ENCODE measurements at regions of chr11 and their contacts with region 1.

Region 1: GRCh38 chr11:117107701-117108590 is 9.7 kb upstream of the SIK3 start:
- DNase-seq: no peak
- ATAC-seq: no peak
- H3K4me3 ChIP-seq: no peak overlapping the region
- H3K27ac ChIP-seq: no peak overlapping the region
- H3K4me1 ChIP-seq: peaks cover 0 to 7% of the 10 kb centered on the region in 2 experiments; a peak in 2 of 5 replicates
- H3K27me3 ChIP-seq: no peaks in the 10 kb centered on the region; a peak in 1 of 5 replicates
- CTCF ChIP-seq: no peak
- EP300 ChIP-seq: no peak
- POLR2A ChIP-seq: no peak
- RAD21 ChIP-seq: no peak

Region 2: DNA sequence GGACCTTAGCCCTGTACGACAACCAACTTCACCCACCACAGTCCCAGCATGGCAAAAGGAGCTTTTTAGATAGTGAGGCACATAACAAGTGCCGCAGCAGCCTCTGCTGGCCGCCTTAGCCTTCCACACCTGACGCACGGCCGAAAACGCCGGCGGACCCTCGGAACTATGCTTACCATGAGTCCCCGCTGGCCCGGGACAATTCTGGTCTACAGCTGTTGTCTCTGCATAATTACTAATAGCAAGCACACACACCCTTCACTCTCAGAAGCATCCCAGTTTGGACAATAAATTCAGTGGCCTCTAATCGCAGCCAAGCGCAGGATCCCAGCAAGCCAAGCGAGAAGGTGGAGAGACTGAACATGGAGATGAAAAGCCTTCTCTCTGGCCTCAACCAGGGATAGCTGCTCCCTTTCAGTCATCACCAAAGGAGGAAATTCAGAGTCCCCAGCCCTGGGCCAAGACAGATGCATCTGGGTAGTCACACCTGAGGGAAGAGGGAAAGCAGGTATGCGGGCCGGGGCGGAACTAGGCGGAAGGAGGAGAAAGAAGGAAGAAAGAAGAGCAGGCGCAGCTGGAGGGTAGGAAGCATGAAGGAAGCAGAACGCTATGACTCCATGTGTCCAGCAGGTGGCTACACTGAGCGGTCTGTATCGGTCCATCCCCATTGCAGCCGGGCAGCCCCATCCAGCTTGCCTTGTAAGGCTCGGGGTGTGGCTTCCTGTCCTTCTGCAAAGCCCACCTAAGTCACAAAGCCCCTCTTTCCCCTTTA is 375.5 kb before region 1 on chr11:
- CTCF ChIA-PET with region 1: interaction called, 5 read pairs
- POLR2A ChIA-PET with region 1: no interaction called
- in situ Hi-C with region 1: loop called (anchors 10 kb)
- intact Hi-C with region 1: loop called (anchors 1 kb)
- DNase-seq: peak; percentile 79 to 93 (median 88)
- ATAC-seq: peak; percentile 97
- H3K4me3 ChIP-seq: no peak overlapping the region
- H3K27ac ChIP-seq: no peak overlapping the region
- H3K4me1 ChIP-seq: no peaks in the 10 kb centered on the region
- H3K27me3 ChIP-seq: peaks cover 19 to 49% of the 10 kb centered on the region in 2 experiments; a peak in 4 of 5 replicates
- CTCF ChIP-seq: peak; percentile 82 to 86 (median 82)
- EP300 ChIP-seq: no peak
- POLR2A ChIP-seq: no peak
- RAD21 ChIP-seq: peak; percentile 40 to 77; a peak in 3 of 4 replicates

Region 3: DNA sequence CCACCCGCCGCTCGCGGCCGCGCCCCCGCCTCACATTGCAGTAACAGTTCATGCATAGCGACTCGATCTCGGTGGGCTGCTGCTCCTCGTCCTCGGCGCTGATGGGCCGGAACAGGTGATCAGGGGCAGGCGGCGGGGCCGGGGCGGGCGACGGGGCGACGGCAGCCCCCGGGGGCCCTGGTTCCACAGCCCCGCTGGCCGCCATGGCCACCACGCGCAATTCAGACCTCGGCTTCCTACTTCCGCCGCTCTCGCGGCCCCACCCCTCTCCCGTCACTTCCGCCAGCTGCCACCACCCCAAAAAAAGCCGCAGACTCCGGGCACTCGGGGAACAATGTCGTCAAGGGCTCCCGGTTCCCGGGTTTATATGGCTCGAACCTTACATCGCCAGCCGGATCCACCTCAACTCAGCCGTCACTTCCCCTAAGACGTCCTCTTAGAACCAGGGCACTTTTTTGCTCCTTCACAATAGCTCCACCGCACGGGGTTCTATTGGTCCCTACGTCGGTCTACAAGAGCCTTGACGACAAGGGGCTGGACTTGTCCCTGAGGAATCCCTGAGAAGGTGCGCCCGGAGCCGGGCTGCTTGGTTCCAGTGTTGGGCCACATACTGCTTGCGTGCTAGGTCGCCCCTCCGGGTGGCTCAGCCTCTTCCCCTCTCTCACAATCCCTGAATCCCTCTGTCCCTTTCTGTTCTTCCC is 320.0 kb before region 1 on chr11 and contains the start of gene ZPR1:
- CTCF ChIA-PET with region 1: interaction called, 11 read pairs
- POLR2A ChIA-PET with region 1: no interaction called
- in situ Hi-C with region 1: loop called (anchors 5 kb)
- intact Hi-C with region 1: loop called (anchors 1 kb)
- DNase-seq: peak; percentile 83 to 93 (median 90)
- ATAC-seq: peak; percentile 87
- H3K4me3 ChIP-seq: peak within 1 kb of the TSS; percentile 98
- H3K27ac ChIP-seq: peak within 1 kb of the TSS; percentile 60
- H3K4me1 ChIP-seq: peaks cover 22 to 33% of the 10 kb centered on the region in 2 experiments; a peak in 4 of 5 replicates
- H3K27me3 ChIP-seq: no peaks in the 10 kb centered on the region
- CTCF ChIP-seq: no peak; a peak in 1 of 6 replicates
- EP300 ChIP-seq: no peak
- POLR2A ChIP-seq: peak; percentile 83
- RAD21 ChIP-seq: no peak
- polyA plus RNA-seq, gene ZPR1: 13.0 to 17.2 TPM

Region 4: GRCh38 chr11:116879800-116880625 is 227.9 kb before region 1 on chr11:
- CTCF ChIA-PET with region 1: interaction called, 23 read pairs
- POLR2A ChIA-PET with region 1: interaction called, 3 read pairs
- in situ Hi-C with region 1: loop called (anchors 5 kb)
- intact Hi-C with region 1: loop called (anchors 1 kb)
- DNase-seq: peak in 3 of 4 experiments; percentile 34 to 66 (median 48)
- ATAC-seq: peak; percentile 97
- H3K4me3 ChIP-seq: no peak overlapping the region
- H3K27ac ChIP-seq: no peak overlapping the region
- H3K4me1 ChIP-seq: no peaks in the 10 kb centered on the region
- H3K27me3 ChIP-seq: no peaks in the 10 kb centered on the region
- CTCF ChIP-seq: peak; percentile 64 to 78 (median 67); a peak in 5 of 6 replicates
- EP300 ChIP-seq: no peak
- POLR2A ChIP-seq: no peak
- RAD21 ChIP-seq: peak; percentile 78 to 83

Region 5: GRCh38 chr11:116980136-116980793 is 127.7 kb before region 1 on chr11:
- CTCF ChIA-PET with region 1: no interaction called
- POLR2A ChIA-PET with region 1: no interaction called
- in situ Hi-C with region 1: no loop called
- intact Hi-C with region 1: no loop called
- DNase-seq: no peak
- ATAC-seq: no peak
- H3K4me3 ChIP-seq: no peak overlapping the region
- H3K27ac ChIP-seq: no peak overlapping the region
- H3K4me1 ChIP-seq: no peaks in the 10 kb centered on the region
- H3K27me3 ChIP-seq: no peaks in the 10 kb centered on the region
- CTCF ChIP-seq: no peak
- EP300 ChIP-seq: no peak
- POLR2A ChIP-seq: no peak
- RAD21 ChIP-seq: no peak

Region 6: GRCh38 chr11:117072517-117073461 is 35.2 kb before region 1 on chr11:
- CTCF ChIA-PET with region 1: no interaction called
- POLR2A ChIA-PET with region 1: no interaction called
- in situ Hi-C with region 1: no loop called
- intact Hi-C with region 1: no loop called
- DNase-seq: peak; percentile 49 to 68 (median 59)
- ATAC-seq: peak; percentile 58
- H3K4me3 ChIP-seq: no peak overlapping the region
- H3K27ac ChIP-seq: no peak overlapping the region; the same call in 2 of the 3 replicates
- H3K4me1 ChIP-seq: peaks cover 20 to 27% of the 10 kb centered on the region in 2 experiments; a peak in 4 of 5 replicates
- H3K27me3 ChIP-seq: no peaks in the 10 kb centered on the region
- CTCF ChIP-seq: no peak
- EP300 ChIP-seq: peak; percentile 78
- POLR2A ChIP-seq: no peak
- RAD21 ChIP-seq: no peak